SK-N-SH (cell line): ENCODE measurements at regions of chr7 and their contacts with region 1.

Region 1: DNA sequence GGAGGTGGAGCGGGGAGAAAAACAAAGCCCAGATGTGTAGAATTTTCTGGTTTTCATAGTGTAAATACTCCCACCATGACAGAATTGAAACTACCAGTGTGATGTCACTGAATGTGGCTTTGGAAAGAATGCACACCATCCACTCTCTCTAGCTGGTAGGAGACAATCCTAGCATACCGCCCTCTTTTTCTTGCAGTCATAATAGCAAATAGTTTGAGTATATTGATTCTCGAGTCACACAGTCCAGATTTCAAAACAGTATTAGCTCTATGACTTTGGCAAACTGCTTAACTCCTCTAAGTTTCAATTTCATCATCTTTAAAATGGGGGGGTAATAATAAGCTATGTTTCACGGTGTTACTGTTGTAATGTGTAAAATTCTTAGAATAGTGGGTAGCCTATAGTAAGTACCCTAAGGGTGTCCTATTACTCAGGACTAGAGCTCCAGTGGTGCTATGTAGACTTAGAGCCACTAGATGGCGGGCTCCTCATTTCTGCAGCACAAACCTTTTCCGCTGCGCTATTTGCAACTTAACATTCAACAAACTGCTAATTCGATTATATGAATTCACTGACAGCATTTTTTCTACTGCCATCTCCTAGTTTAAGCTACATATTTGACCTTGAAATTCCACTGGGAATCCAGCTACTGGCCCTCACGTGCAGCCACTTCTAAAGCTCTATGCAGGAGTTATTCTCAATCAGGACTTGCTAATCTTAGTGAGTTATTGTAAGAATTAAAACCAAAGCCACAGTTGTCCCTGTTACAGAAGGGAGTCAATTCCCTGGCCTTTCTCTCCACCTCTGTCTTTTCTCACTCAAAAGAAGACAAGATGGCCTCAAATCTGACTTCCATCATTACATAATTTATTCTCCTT is 18.7 kb downstream of the TAS2R40 start:
- DNase-seq: peak; percentile 68
- H3K4me3 ChIP-seq: peak overlapping the region; percentile 13 to 18; a peak in 2 of 4 replicates
- H3K27ac ChIP-seq: peak overlapping the region in 1 of 2 experiments; percentile 42; a peak in 2 of 4 replicates
- H3K4me1 ChIP-seq: peaks cover 0 to 7% of the 10 kb centered on the region in 2 experiments; a peak in 2 of 4 replicates
- H3K27me3 ChIP-seq: no peaks in the 10 kb centered on the region
- CTCF ChIP-seq: peak; percentile 100
- EP300 ChIP-seq: no peak
- RAD21 ChIP-seq: peak; percentile 95

Region 2: DNA sequence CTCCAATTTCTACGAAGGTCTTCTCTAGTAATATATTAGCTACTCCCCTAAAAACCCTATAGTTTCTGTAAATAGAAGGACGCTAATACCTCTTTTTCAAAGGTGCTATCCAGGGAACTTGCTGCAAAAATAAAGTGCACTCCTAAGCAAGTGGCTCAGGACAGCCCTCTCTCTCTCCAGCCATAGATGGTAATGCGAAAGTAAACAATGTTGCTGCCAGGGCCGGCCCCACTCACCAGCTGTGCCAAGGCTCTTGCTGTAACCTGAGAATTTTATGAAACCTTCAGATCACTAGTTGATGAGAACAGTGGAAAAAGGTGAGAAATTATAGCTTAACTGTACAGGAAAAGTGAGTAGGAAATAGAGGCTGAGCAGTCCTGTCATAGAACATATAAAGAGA is 68.2 kb before region 1 on chr7:
- CTCF ChIA-PET with region 1: no interaction called
- POLR2A ChIA-PET with region 1: no interaction called
- DNase-seq: no peak
- H3K4me3 ChIP-seq: peak overlapping the region; percentile 33 to 52; a peak in 3 of 4 replicates
- H3K27ac ChIP-seq: no peak overlapping the region
- H3K4me1 ChIP-seq: no peaks in the 10 kb centered on the region
- H3K27me3 ChIP-seq: no peaks in the 10 kb centered on the region; the same call in 1 of the 2 replicates
- CTCF ChIP-seq: no peak
- EP300 ChIP-seq: no peak
- RAD21 ChIP-seq: no peak

Region 3: DNA sequence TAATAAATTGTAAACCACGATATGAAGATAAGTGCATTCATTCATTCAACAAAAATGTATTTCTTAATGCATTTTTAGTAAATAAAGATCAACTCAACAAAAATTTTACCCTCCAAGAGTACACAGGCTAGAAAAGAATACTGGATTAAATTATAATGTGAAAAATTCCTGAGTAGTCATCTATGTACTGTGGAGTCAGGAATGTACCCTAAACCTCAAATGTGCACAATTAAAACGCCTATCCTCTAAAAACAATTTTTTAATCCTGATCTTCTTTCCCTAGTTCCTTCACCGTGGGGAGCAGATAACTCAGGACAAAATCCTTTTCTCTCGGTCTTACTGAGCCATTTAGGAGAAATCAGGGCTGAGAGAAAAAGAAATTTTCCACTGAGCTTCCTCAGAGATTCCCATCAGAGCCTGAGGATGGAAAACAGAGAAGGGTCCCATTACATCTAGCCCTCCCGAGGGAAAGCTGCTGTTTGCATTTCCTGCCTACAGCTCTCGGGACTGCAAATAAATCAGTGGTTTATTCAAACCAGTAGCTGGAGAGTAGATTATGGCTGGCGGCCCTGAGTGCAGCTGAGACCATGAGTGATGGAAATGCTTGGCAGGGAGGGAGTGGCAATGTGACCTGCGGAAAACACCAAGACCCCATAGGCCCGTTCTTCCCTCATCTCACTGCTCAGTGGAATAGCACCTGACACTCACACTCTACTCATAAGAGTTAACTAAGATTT is 11.3 kb before region 1 on chr7:
- CTCF ChIA-PET with region 1: interaction called, 15 read pairs
- POLR2A ChIA-PET with region 1: no interaction called
- DNase-seq: peak; percentile 17
- H3K4me3 ChIP-seq: no peak overlapping the region
- H3K27ac ChIP-seq: no peak overlapping the region
- H3K4me1 ChIP-seq: peaks cover 2 to 4% of the 10 kb centered on the region in 2 experiments; a peak in 2 of 4 replicates
- H3K27me3 ChIP-seq: peaks cover 6% of the 10 kb centered on the region; the same call in 1 of the 2 replicates
- CTCF ChIP-seq: no peak
- EP300 ChIP-seq: no peak
- RAD21 ChIP-seq: no peak

Region 4: DNA sequence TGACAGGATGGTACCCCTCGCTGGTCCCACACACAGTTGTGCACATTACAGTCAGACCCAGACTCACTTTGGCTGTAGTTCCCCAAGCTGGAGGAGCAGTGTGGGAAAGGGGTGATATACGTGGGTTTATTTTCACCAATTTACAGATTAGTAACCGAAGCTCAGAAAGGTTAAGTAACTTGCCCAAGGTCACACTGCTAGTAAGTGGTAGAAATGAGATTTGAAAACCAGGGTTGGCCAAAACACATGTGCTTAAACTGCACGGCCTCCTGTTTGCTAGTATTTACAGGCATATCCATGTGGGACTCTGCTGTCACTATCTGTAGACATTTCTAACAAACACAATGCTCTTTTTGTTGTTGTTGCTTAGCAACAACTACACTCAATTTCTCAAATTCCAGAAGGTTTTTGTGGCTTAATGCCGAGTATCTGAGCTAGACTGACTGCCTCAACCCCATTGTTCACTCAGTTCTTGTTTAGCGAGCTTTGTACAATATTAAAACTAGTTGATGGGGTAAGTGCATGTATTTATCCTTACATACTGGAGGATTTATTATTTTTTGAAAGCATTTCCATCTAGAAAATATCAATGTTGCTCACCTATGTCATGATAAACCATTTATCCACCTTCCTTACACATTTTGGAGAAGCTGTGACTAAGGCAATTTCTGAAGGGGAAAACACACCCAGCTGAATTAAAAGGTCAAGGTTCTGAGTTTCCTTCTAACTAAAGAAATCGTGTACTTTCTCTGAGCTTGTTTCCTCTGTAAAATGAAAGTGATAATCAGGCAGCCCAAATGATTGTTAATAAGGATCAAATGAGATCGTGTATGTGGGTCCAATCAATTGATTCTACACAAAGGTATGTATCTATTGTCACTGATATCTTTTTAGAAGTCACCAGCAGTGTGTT is 38.9 kb after region 1 on chr7:
- CTCF ChIA-PET with region 1: interaction called, 11 read pairs
- POLR2A ChIA-PET with region 1: no interaction called
- DNase-seq: no peak
- H3K4me3 ChIP-seq: no peak overlapping the region
- H3K27ac ChIP-seq: peak overlapping the region in 1 of 2 experiments; percentile 44; a peak in 2 of 4 replicates
- H3K4me1 ChIP-seq: peaks cover 3 to 9% of the 10 kb centered on the region in 2 experiments; a peak in 2 of 4 replicates
- H3K27me3 ChIP-seq: no peaks in the 10 kb centered on the region
- CTCF ChIP-seq: no peak
- EP300 ChIP-seq: no peak
- RAD21 ChIP-seq: no peak

Region 5: DNA sequence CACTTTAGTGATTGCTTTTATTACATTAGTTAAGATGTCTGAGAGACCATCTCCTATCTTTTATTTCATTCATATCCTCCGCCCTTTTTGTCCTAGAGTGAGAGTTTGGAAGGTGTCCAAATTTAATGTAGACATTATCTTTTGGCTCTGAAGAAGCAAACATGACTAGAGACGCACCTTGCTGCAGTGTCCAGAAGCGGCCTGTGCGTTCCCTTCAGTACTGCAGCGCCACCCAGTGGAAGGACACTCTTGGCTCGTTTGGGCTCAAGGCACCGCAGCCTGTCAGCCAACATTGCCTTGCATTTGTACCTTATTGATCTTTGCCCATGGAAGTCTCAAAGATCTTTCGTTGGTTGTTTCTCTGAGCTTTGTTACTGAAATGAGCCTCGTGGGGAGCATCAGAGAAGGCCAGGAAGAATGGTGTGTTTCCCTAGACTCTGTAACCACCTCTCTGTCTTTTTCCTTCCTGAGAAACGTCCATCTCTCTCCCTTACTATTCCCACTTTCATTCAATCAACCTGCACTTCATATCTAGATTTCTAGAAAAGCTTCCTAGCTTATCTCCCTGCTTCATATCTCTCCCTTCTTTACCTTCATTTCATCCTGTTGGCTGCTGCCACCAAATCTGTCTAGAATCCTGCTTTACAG is 65.0 kb after region 1 on chr7:
- CTCF ChIA-PET with region 1: interaction called, 60 read pairs
- POLR2A ChIA-PET with region 1: no interaction called
- DNase-seq: peak; percentile 68
- H3K4me3 ChIP-seq: no peak overlapping the region
- H3K27ac ChIP-seq: no peak overlapping the region
- H3K4me1 ChIP-seq: no peaks in the 10 kb centered on the region; a peak in 1 of 4 replicates
- H3K27me3 ChIP-seq: no peaks in the 10 kb centered on the region
- CTCF ChIP-seq: peak; percentile 92
- EP300 ChIP-seq: no peak
- RAD21 ChIP-seq: peak; percentile 63

Region 6: DNA sequence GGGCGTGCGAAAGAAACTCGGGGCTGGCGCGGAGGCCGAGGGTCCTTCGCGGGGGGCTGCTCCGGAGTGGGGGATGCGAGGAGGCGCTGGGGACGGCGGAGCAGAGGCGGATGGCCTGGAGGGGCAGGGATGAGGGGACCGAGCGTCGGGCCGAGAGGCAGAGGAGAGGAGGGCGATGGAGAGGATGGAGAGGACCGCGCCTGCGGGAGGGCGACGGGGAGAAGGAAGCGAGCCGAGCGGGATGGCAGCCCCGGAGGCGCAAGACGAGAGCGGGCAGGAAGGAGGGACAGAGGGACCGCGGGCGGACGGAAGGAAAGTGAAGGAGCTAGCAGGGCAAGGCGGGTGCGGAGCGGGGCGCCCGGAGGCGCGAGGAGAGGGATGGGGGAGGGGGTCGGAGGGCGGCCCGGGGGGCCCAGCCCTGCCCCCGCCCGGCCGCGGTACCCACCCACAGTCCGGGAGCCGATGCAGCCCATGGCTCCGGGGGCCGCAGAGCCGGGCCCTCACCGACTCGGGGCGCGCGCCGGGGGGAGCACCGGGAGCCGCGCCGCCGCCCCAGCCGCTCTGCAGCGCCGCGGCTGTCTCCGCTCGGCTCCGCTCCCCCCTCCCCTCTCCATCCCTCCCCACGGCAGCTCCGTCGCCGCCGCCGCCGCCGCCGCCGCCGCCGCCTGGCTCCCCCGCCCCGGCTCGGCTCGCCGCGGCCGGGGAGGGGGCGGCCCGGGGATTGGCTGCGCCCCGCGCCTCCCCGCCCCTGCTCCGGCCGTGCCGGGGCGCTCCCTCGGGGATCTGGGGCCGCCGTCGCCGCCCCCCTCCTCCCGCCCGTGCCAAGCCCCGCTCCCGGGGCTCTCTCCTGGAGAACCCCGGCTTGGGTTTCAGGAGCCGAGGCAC is 121.8 kb after region 1 on chr7 and contains the start of gene FAM131B:
- CTCF ChIA-PET with region 1: interaction called, 17 read pairs
- POLR2A ChIA-PET with region 1: no interaction called
- DNase-seq: peak; percentile 91
- H3K4me3 ChIP-seq: peak within 1 kb of the TSS; percentile 73 to 82
- H3K27ac ChIP-seq: no peak within 1 kb of the TSS
- H3K4me1 ChIP-seq: peaks cover 0 to 8% of the 10 kb centered on the region in 2 experiments; a peak in 1 of 4 replicates
- H3K27me3 ChIP-seq: no peaks in the 10 kb centered on the region
- CTCF ChIP-seq: no peak
- EP300 ChIP-seq: no peak
- RAD21 ChIP-seq: no peak
- polyA plus RNA-seq, gene FAM131B: 43.6 and 50.1 TPM in 2 replicates

Region 7: GRCh38 chr7:143408686-143409561 is 168.4 kb after region 1 on chr7 and contains the start of gene EPHA1:
- CTCF ChIA-PET with region 1: interaction called, 125 read pairs
- POLR2A ChIA-PET with region 1: no interaction called
- DNase-seq: no peak
- H3K4me3 ChIP-seq: no peak within 1 kb of the TSS
- H3K27ac ChIP-seq: no peak within 1 kb of the TSS
- H3K4me1 ChIP-seq: peaks cover 4 to 23% of the 10 kb centered on the region in 2 experiments; a peak in 3 of 4 replicates
- H3K27me3 ChIP-seq: no peaks in the 10 kb centered on the region
- CTCF ChIP-seq: no peak
- EP300 ChIP-seq: no peak
- RAD21 ChIP-seq: no peak
- polyA plus RNA-seq, gene EPHA1: 0.26 and 0.49 TPM in 2 replicates